Dorsolateral prefrontal cortex (tissue), 120 donors: ENCODE measurements at regions of chr1 and their contacts with region 1.

Region 1: GRCh38 chr1:219660666-219661463 is 48.0 kb upstream of the ZC3H11B start:
- DNase-seq: peak; percentile 46 to 94 (median 91)
- H3K4me3 ChIP-seq: peak overlapping the region in 58 of 59 donors; percentile 3 to 62 (median 40)
- H3K27ac ChIP-seq: peak overlapping the region; percentile 11 to 93 (median 81)
- H3K27me3 ChIP-seq: no peaks in the 10 kb centered on the region
- CTCF ChIP-seq: peak; percentile 64 to 95 (median 87)

Region 2: DNA sequence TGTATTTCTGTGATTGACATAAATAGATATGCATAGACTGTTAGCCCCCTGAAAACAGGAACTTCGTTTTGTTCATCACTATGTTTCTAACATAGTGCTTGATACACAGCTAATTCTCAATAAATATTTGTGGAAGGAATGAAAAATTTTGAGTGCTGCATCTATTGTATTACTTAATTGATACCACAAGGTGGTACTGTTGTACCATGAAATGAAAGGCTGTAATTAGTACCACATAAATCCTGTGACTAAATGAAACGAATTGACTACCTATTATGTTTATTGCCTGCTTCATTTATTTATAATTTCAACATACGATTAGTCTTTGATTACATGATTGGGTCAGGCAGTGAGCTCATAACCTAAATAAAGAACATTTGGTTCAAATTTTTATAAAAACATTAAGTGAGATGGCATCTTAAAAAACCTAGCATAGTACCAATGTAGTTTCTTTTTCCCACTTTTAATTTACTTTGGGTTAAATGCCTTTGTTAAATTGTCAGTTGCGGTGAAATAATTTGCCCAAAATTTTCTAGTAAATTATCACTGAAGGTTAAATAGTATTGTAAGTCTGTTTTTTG is 1330.7 kb before region 1 on chr1:
- intact Hi-C with region 1: loop called in 1 of 2 experiments (anchors 10 kb)
- DNase-seq: no peak
- H3K4me3 ChIP-seq: peak overlapping the region in 7 of 59 donors; percentile 15 to 45 (median 22)
- H3K27ac ChIP-seq: no peak overlapping the region
- H3K27me3 ChIP-seq: no peaks in the 10 kb centered on the region
- CTCF ChIP-seq: peak; percentile 58 to 94 (median 80)

Region 3: DNA sequence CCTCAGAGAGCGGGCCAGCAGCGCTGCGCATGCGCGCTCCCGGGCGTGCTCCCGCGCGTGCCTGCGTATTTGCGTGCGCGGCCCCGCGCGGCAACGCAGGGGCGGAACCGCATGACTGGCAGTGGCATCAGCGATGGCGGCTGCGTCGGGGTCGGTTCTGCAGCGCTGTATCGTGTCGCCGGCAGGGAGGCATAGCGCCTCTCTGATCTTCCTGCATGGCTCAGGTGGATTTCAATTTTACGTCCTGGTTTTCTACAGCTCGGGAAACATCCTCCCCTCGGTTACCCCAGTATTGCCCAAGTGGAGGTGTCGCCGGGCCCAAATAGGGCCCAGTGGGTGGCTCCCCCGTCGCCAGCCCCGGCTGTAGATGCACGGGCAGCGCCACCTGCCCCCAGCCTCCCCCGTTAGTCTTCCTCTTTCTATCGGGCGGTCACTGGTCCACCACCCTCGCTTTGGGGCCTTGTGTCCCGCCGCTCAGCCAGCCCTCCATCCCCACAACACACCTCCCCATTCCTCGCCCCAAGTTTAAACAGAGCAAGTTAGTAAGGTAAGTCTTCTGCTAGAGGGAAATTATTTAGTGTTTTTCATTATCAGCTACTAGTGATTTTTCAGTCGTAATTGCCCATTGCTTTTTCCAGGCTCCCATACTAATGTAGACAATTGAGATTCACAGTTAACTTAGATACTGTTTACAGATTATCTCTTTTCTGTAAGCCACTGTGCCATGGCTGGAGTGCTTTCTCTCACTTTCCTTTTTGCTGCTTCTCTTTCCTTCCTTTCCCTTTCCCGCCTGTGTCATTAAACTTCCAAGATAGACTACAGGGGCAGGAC is 486.9 kb before region 1 on chr1 and contains the start of gene LYPLAL1:
- intact Hi-C with region 1: loop called in 1 of 2 experiments (anchors 10 kb)
- DNase-seq: peak; percentile 75 to 95 (median 84)
- H3K4me3 ChIP-seq: peak within 1 kb of the TSS; percentile 65 to 96 (median 85)
- H3K27ac ChIP-seq: peak within 1 kb of the TSS; percentile 16 to 98 (median 89)
- H3K27me3 ChIP-seq: no peaks in the 10 kb centered on the region
- CTCF ChIP-seq: peak in 49 of 56 donors; percentile 11 to 64 (median 41)
- total RNA-seq, gene LYPLAL1: 32.7 to 64.3 (median 46.4) TPM

Region 4: GRCh38 chr1:219422811-219423598 is 237.9 kb before region 1 on chr1:
- intact Hi-C with region 1: loop called in 1 of 2 experiments (anchors 10 kb)
- DNase-seq: no peak
- H3K4me3 ChIP-seq: no peak overlapping the region
- H3K27ac ChIP-seq: no peak overlapping the region
- H3K27me3 ChIP-seq: no peaks in the 10 kb centered on the region
- CTCF ChIP-seq: no peak

Region 5: DNA sequence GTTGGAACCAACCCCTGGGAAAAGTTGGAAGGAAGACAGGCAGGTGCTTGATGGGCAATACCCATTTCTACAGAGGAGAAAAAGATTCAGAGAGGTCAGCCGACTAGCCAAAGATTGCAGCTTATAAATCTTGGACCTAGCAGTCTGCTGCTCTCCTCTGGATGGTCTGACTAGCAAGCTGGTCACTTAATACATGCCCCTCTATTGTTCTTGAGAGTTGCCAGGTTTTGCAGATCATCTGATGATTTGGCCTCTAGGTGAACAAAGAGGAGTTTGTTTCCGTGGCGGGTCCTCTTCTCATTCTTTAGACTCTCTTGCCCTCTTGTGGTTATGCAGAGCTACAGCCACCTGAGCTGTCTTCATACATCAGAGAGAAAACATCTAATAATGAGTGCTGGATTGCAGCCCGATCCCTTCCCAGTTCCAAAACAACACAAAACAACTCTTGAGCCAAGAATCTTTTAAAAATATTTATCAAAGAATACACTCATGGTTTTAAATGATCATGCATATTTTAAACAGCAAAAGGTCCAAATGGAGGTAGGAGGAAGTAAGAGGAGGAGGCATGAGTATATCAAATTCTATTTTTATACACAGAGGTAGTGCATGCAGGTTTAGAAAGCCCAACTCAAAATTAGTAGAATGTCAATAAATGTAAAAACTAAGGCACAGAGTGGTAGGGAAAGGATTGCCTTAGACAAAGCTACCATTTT is 151.8 kb after region 1 on chr1:
- intact Hi-C with region 1: loop called (anchors 2 to 5 kb)
- DNase-seq: peak in 6 of 10 donors; percentile 6 to 66 (median 44)
- H3K4me3 ChIP-seq: peak overlapping the region in 18 of 59 donors; percentile 1 to 38 (median 20)
- H3K27ac ChIP-seq: peak overlapping the region in 14 of 59 donors; percentile 2 to 76 (median 32)
- H3K27me3 ChIP-seq: peaks cover 0 to 4% (median 0%) of the 10 kb centered on the region in 45 donors
- CTCF ChIP-seq: peak; percentile 74 to 98 (median 92)